ENCODE measurements at regions of chr20 and their contacts with region 1.

Region 1: GRCh38 chr20:44747166-44748004 is 1.7 kb downstream of the KCNK15 start:
- DNase-seq: peak; percentile 92

Region 2: DNA sequence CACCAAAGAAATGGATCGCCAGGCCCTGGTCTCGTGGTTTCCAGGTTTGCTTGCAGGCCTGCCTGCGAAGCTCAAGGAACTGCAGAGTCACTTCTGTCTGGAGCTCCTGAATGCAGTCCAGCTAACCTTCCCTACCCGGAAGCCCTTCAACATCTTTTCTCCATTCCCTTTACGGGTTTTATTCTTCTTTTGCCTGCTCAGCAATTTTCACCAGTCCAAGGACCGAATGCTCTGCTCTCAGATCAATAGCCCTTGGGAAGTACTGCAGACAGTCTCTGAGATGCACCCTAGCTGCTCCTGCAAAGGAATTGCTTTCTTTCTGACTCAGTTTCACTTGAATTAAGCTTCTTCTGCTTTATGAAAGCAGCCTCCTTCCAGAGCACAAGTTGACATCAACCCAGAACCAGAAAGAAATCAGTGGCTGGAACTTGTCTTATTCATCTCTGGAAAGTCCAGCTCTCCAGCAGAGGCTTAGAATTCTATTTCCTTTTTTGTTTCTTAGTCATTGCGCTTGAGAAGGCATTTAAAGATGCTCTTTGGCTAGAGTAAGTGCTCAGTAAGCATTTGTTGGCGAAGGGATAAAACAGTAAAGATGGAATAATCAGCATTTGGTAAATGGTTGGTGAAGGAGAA is 119.4 kb after region 1 on chr20:
- intact Hi-C with region 1: loop called (anchors 2 to 5 kb)
- DNase-seq: no peak

Region 3: DNA sequence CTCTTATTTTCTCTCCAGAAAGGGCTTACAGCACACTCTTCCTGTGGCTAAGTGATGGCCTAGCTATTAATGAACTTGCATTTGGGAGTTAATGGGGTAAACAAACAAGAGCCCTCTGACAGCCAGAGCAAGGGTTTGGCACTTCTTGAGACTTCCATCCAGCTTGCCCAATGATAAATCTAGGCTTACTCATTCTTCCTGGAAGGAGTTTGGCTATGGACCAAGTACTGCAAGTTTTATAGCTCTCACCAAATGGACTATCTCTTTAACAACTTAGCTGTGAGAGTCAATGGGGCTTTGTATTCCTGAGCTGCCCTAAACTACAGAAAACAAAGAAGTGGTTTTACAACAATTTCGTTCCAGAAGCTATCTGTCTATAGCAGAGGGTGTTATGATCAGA is 410.6 kb after region 1 on chr20:
- intact Hi-C with region 1: no loop called
- DNase-seq: no peak